Psoas muscle (tissue), 8 donors: ENCODE measurements at regions of chr13 and their contacts with region 1.

Region 1: DNA sequence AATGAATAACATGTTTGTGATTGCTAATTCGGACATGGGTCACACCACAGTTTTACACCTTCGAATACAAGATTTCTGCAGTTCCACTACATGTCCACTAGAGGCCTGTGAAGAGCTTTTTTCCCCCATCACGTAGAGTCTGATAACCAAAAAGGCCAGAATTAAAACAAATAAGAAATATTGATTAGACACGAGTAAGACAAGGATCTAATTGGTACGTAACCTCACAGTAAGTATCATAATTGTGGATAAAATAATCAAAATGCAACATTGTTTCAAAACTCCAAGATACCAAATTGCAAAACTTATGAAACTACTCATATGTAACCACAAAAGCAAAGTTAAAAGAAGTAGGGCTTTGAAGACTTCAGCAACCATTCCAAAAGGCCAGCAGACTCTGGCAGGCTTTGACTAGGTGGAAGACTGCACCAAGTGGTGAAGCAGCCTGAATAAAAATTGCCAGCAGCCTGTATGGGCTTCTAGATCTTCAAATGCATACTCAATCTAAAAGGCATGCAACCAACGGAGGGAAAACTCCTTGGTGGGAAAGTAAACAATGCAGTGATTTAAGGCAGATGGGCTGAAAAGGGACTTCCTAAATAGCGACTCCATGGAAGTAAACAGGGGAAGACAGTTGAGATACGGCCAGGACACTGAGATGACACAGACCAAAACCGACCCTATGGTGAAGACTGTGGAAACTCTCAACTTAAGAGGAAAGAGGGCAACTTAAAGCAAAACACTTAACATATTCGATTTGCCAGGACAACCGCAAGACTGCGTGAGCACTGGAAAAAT is 56.7 kb downstream of the STARD13 start:
- DNase-seq: no peak
- ATAC-seq: peak; percentile 58 to 90 (median 70)
- H3K4me3 ChIP-seq: no peak overlapping the region
- H3K27ac ChIP-seq: no peak overlapping the region
- H3K4me1 ChIP-seq: peaks cover 14% of the 10 kb centered on the region
- H3K27me3 ChIP-seq: no peaks in the 10 kb centered on the region
- CTCF ChIP-seq: peak; percentile 94

Region 2: DNA sequence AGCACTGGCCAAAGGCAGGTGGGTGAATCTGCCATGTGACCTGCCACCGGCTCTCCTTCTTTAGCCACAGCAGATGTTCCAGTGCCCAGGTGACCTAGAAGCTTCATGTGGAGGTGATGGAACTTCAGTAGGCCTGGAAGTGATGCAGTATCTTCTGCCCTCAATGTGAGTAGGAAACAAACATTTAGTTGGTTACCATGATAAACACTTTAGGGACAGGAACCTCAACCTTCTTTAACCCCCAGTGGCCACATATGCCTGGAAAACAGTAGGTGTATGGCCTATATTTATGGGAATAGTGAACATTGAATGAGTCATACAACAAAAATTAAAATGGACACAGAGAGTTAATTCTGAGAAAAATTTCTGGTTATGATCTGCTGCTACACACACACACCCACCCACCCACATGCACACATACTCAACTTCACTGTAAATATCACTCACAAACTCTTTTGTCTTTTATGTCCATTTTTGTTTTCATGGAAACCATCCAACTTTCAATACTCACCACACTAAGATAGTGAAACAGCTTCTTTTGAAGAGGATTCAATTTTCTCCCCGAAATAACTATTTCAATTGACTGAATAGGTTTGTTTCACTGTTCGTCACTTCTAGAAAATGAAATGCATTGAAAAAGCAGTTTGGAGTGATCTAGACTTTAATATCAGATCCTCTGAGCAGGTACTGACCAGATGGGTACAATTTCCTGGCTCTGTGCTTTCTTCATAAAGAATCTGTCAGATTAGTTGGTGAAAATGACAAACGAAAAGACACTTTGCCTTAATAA is 40.6 kb before region 1 on chr13:
- intact Hi-C with region 1: no loop called
- DNase-seq: no peak
- ATAC-seq: no peak
- H3K4me3 ChIP-seq: no peak overlapping the region
- H3K27ac ChIP-seq: no peak overlapping the region
- H3K4me1 ChIP-seq: peaks cover 6% of the 10 kb centered on the region
- H3K27me3 ChIP-seq: no peaks in the 10 kb centered on the region
- CTCF ChIP-seq: no peak

Region 3: DNA sequence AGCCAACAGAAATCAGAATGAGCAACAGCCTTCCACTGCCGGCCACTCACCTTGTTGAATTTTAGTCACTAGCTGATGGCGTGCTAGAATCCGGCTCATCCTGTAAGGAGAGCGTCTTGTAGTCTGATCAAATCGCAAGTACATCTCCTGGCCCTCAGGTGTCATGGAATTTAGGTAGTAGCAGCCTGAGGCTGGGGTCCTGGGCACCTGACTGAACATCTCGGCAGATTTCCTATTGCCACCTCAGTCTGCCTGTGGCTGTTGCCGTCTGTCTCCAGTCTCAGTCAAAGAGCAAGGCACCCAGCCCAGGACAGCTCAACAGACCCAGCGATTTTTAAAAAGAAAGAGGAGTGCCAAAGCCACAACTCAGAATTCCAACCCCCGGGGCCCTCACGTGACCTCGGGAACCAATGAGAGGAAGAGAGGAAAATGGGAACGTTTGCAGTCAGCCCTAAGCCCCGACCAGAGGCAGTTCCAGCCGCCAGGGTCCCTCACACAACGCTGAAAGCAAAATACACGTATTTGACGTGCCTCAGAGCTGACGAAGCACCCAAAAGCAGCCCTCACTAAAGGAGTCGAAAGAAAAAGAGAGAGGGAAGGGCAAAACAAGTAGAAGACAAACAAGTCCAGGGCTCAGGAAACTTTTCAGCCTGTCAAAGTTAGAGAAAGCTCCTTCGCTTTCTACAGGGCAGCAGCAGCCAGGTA is 56.7 kb after region 1 on chr13 and contains the start of gene STARD13:
- intact Hi-C with region 1: loop called in 1 of 2 experiments (anchors 5 kb)
- DNase-seq: peak; percentile 91 to 93
- ATAC-seq: peak; percentile 93 to 95 (median 95)
- H3K4me3 ChIP-seq: peak within 1 kb of the TSS; percentile 67
- H3K27ac ChIP-seq: peak within 1 kb of the TSS; percentile 88
- H3K4me1 ChIP-seq: peaks cover 31% of the 10 kb centered on the region
- H3K27me3 ChIP-seq: no peaks in the 10 kb centered on the region
- CTCF ChIP-seq: peak; percentile 33
- total RNA-seq, gene STARD13: 5.2 to 9.2 (median 7.1) TPM

Region 4: GRCh38 chr13:33312150-33312860 is 83.5 kb after region 1 on chr13:
- intact Hi-C with region 1: loop called in 1 of 2 experiments (anchors 5 kb)
- DNase-seq: no peak
- ATAC-seq: peak in 2 of 4 donors; percentile 47 to 73
- H3K4me3 ChIP-seq: no peak overlapping the region
- H3K27ac ChIP-seq: no peak overlapping the region
- H3K4me1 ChIP-seq: peaks cover 7% of the 10 kb centered on the region
- H3K27me3 ChIP-seq: no peaks in the 10 kb centered on the region
- CTCF ChIP-seq: peak; percentile 43

Region 5: DNA sequence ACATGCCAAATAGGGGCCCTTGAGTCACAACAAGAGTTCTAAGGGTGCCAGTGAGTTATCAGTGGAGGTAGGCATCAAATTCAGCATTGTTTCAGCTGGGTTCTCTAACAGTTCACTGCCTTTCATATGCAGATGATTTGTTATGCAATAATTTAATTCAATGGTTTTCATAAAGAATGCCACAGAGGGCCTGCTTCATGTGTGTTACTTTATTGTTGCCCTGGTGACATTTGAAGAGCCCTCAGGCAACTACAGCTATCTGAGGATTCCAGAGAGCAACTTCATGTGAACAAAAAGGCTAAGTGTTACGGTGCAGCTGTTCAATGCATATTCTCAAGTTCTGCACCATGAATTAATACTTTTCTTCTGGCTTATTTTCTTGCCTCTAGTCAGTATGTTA is 99.9 kb after region 1 on chr13:
- intact Hi-C with region 1: no loop called
- DNase-seq: no peak
- ATAC-seq: no peak
- H3K4me3 ChIP-seq: no peak overlapping the region
- H3K27ac ChIP-seq: no peak overlapping the region
- H3K4me1 ChIP-seq: no peaks in the 10 kb centered on the region
- H3K27me3 ChIP-seq: no peaks in the 10 kb centered on the region
- CTCF ChIP-seq: no peak

Region 6: DNA sequence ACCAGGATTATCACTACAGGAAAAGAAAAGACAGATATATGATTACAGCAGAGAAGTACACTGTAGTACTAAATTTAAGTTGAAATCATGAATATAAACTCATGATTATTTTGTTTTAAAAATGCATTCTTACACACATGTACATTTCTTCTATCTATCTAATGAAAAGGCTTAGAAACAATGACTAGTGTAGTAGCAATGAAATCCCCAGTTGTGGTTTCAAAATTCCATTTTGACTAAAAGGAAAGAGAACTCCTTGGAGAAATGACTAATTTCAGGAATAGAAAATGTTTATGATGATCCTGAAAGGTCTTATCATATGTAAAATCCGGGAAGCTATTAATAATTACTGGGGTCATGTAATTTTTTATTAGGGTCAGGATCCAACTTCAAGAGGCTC is 251.7 kb after region 1 on chr13:
- intact Hi-C with region 1: no loop called
- DNase-seq: no peak
- ATAC-seq: no peak
- H3K4me3 ChIP-seq: no peak overlapping the region
- H3K27ac ChIP-seq: no peak overlapping the region
- H3K4me1 ChIP-seq: no peaks in the 10 kb centered on the region
- H3K27me3 ChIP-seq: no peaks in the 10 kb centered on the region
- CTCF ChIP-seq: no peak

Region 7: DNA sequence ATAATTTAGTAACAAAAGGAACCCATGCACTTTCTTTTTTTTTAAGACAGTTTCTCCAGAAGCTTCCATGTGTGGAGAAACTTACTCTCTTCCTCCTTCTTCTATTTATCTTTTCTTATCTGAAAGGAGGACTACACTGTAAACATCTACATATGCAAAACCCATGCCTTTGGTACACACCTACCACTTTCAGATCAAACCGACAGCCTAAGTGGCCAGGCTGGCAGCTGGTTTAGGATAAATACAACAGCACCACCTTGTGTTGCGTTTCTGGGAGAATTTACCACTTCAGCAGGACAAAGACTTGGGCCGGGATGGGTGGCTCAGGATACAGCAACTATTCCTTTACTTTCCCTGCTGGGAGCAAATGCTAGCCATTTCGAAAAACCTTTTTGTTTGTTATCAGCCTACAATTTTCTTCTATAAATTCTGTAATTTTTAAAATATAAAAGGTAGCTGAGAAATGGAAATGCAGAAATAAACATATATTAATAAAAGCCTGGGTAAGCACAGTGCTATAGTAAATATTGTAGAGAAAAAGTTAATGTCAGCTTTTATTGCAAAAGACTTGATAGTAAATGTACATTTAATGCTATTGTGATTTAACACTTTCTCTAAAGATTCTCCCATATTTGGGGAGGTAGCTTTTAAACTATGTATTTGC is 495.1 kb after region 1 on chr13:
- intact Hi-C with region 1: loop called (anchors 2 to 5 kb)
- DNase-seq: peak; percentile 33 to 62
- ATAC-seq: peak; percentile 82 to 99 (median 95)
- H3K4me3 ChIP-seq: no peak overlapping the region
- H3K27ac ChIP-seq: no peak overlapping the region
- H3K4me1 ChIP-seq: peaks cover 10% of the 10 kb centered on the region
- H3K27me3 ChIP-seq: no peaks in the 10 kb centered on the region
- CTCF ChIP-seq: peak; percentile 78